Transverse colon (tissue), 4 donors: ENCODE measurements at regions of chr11 and their contacts with region 1.

Region 1: DNA sequence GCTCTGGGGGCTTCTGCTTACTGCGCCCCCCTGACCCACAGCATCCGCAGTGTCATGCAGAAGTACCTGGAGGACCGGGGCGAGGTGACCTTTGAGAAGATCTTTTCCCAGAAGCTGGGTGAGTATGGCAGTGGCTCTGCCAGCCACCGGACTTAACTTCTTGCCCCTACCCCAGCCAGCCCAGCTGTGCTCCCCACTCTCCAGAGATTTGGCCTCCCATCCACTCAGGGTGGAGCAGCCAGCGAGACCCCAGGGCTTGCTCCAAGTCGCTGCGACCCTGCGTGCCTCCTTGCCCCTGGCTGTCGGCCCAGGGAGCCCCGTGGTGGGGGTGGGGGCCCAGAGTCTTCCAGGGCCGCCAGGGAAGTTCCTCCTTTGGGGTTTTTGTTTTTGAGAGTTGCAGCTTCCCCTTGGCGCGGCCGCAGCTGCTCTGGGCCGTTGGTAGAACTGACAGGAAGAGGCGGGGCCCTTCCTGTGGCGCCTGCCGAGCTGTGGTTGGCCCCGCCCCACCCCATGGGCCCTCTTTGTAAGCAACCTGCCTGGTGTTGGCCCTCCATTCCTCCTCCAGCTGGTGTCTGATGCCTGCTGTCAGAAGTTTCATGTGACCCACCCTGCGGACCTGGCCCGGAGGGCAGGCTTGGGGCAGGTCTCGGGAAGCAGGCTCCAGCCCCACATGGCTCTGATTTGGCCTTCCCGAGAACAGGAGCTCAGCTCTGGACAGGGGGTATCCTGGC is 11.1 kb downstream of the GRK2 start:
- DNase-seq: peak; percentile 94
- H3K4me3 ChIP-seq: peak overlapping the region in 3 of 4 donors; percentile 5 to 37 (median 21)
- H3K27ac ChIP-seq: peak overlapping the region; percentile 95 to 98 (median 97)
- H3K4me1 ChIP-seq: peaks cover 44 to 67% (median 58%) of the 10 kb centered on the region in 4 donors
- H3K27me3 ChIP-seq: no peaks in the 10 kb centered on the region
- CTCF ChIP-seq: no peak
- EP300 ChIP-seq: no peak
- POLR2A ChIP-seq: peak; percentile 48

Region 2: GRCh38 chr11:66638177-66639065 is 639.0 kb before region 1 on chr11 and contains the start of gene RBM4:
- in situ Hi-C with region 1: no loop called
- intact Hi-C with region 1: loop called (anchors 10 kb)
- DNase-seq: peak; percentile 98
- H3K4me3 ChIP-seq: peak within 1 kb of the TSS; percentile 56 to 88 (median 64)
- H3K27ac ChIP-seq: peak within 1 kb of the TSS; percentile 90 to 94 (median 92)
- H3K4me1 ChIP-seq: peaks cover 21 to 58% (median 47%) of the 10 kb centered on the region in 4 donors
- H3K27me3 ChIP-seq: no peaks in the 10 kb centered on the region
- CTCF ChIP-seq: peak in 3 of 5 experiments; percentile 11 to 32 (median 25)
- EP300 ChIP-seq: no peak
- POLR2A ChIP-seq: peak; percentile 94
- total RNA-seq, gene RBM4: 66.5 to 193 (median 68.8) TPM

Region 3: DNA sequence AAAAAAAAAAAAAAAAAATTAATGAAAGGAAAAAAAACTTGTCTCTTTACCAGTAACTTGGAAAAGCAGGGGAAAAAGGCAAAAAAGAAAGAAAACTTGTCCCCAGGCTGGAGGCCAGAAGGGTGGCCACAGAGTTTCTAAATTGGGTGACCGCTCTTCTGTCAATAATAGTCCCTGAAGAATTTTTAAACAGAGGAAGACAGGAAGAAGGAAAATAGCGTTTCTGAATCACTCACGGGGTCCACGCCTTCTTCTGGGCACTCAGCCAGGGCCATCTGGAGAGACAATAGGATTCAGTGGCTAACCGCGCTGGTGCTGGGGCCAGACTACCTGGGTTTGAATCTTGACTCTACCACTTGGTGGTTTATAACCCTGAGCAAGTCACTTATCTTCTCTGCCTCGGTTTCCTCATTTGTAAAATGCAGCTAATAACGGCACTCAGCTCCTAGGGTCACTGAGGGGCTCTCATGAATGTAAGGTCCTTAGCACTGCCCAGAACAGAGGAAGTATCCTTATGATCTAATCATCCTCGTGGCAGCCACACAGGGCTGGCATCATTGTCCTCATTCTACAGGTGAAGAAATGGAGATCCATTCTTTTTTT is 295.3 kb before region 1 on chr11:
- in situ Hi-C with region 1: no loop called
- intact Hi-C with region 1: no loop called
- DNase-seq: peak; percentile 89
- H3K4me3 ChIP-seq: no peak overlapping the region
- H3K27ac ChIP-seq: no peak overlapping the region
- H3K4me1 ChIP-seq: peaks cover 0 to 18% (median 10%) of the 10 kb centered on the region in 4 donors
- H3K27me3 ChIP-seq: no peaks in the 10 kb centered on the region
- CTCF ChIP-seq: no peak
- EP300 ChIP-seq: no peak
- POLR2A ChIP-seq: no peak

Region 4: GRCh38 chr11:67060111-67060522 is 217.3 kb before region 1 on chr11:
- in situ Hi-C with region 1: no loop called
- intact Hi-C with region 1: no loop called
- DNase-seq: no peak
- H3K4me3 ChIP-seq: no peak overlapping the region
- H3K27ac ChIP-seq: no peak overlapping the region
- H3K4me1 ChIP-seq: peaks cover 11 to 26% (median 15%) of the 10 kb centered on the region in 4 donors
- H3K27me3 ChIP-seq: no peaks in the 10 kb centered on the region
- CTCF ChIP-seq: no peak
- EP300 ChIP-seq: no peak
- POLR2A ChIP-seq: no peak